H1 (cell line): ENCODE measurements at regions of chr15 and their contacts with region 1.

Region 1: DNA sequence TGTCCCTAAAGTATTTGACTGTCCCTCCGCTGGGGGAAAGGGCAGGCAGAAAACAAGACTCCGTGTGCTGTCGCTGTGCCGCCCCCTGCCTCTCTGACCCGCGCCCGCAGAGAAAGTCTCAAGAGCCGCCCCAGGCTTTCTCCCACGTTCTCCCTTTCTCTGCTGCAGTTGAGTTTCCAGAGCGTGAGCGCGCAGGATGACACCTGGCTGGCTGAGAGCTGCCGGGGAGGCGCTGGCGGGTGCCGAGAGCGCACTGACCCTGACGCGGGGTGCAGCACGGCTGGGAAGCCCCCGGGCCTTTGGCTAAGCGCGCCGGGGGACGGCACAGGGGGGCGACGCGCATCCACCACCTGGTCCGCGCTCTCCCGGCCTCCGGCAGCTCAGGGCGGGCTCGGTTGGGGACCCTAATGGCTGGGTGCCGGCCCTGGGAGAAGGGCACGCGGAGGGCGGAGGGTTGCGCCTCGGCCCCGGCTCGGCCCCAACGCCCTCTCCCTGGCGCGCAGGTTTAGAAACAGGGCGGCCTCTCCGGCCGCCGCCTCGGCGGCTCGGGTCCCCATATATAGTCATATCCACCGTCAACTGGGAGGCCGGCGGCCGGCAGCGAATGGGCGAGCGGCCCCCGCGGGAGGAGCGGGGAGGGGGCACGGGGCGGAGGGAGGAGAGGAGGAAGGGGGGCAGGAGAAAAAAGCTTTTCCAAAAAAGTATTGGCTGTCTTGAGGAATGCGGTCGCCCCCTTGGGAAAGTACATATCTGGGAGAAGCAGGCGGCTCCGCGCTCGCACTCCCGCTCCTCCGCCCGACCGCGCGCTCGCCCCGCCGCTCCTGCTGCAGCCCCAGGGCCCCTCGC is at the start of gene TPM1:
- DNase-seq: peak in 1 of 2 experiments; percentile 88
- H3K4me3 ChIP-seq: peak within 1 kb of the TSS; percentile 92 to 98 (median 96)
- H3K27ac ChIP-seq: peak within 1 kb of the TSS; percentile 78
- H3K4me1 ChIP-seq: peaks cover 12 to 43% (median 26%) of the 10 kb centered on the region in 4 experiments
- H3K27me3 ChIP-seq: peaks cover 0 to 3% (median 0%) of the 10 kb centered on the region in 4 experiments; a peak in 2 of 7 replicates
- CTCF ChIP-seq: peak in 1 of 3 experiments; percentile 14; a peak in 1 of 4 replicates
- EP300 ChIP-seq: 0 out of 3 replicates have a peak, but pooled peaks of 1 of the 2 experiments have one; percentile 2
- POLR2A ChIP-seq: peak; percentile 70 to 86
- RAD21 ChIP-seq: peak in 1 of 2 experiments; percentile 26; a peak in 3 of 4 replicates
- total RNA-seq, gene TPM1: 571 and 579 TPM in 2 replicates

Region 2: DNA sequence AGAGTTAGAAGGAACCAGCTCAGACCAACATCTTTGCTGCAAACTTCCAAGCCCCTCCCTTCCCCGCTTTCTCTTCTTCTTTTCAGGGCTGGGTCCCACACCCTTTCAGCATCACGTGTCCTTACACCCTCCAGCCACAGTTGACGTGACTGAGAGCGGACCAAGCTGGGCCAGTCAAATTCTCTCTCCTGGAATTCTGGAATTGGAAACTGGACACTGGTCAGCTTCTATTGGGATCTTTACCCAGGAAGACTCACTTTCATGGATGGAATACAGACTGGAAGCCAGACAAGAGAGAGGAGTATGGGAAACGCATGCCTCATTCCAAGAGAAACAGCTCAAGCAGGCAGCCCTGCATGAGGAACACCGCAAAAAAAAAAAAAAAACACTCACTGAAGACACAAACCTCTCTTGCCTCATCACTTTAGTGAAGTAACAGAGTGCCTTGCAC is 12.1 kb before region 1 on chr15:
- CTCF ChIA-PET with region 1: interaction called, 20 read pairs
- POLR2A ChIA-PET with region 1: interaction called, 104 read pairs
- DNase-seq: no peak
- H3K4me3 ChIP-seq: no peak overlapping the region
- H3K27ac ChIP-seq: no peak overlapping the region
- H3K4me1 ChIP-seq: 0 out of 7 replicates have a peak, but pooled peaks cover 0 to 3% (median 0%) of the 10 kb centered on the region in 4 experiments
- H3K27me3 ChIP-seq: no peaks in the 10 kb centered on the region
- CTCF ChIP-seq: no peak
- EP300 ChIP-seq: no peak
- POLR2A ChIP-seq: no peak
- RAD21 ChIP-seq: no peak

Region 3: DNA sequence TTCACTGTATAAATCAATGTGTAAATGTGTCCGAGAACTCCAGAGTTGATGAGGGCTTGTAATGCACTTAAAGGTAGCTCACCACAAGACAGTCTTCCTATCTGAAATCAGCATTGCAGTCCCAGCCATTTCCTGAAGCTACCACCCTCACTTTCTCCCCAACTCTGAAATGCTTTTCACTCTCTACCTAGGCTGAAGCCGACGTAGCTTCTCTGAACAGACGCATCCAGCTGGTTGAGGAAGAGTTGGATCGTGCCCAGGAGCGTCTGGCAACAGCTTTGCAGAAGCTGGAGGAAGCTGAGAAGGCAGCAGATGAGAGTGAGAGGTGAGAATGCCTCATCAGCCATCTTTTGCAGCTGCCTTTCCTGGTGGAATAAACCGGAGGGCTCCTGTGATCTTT is 14.6 kb after region 1 on chr15:
- CTCF ChIA-PET with region 1: interaction called, 17 read pairs
- POLR2A ChIA-PET with region 1: interaction called, 635 read pairs
- DNase-seq: no peak
- H3K4me3 ChIP-seq: no peak overlapping the region
- H3K27ac ChIP-seq: no peak overlapping the region
- H3K4me1 ChIP-seq: peaks cover 0 to 6% (median 0%) of the 10 kb centered on the region in 4 experiments; a peak in 1 of 7 replicates
- H3K27me3 ChIP-seq: no peaks in the 10 kb centered on the region
- CTCF ChIP-seq: no peak
- EP300 ChIP-seq: no peak
- POLR2A ChIP-seq: no peak; a peak in 1 of 3 replicates
- RAD21 ChIP-seq: no peak